A673 (cell line): ENCODE measurements at regions of chr12 and their contacts with region 1.

Region 1: DNA sequence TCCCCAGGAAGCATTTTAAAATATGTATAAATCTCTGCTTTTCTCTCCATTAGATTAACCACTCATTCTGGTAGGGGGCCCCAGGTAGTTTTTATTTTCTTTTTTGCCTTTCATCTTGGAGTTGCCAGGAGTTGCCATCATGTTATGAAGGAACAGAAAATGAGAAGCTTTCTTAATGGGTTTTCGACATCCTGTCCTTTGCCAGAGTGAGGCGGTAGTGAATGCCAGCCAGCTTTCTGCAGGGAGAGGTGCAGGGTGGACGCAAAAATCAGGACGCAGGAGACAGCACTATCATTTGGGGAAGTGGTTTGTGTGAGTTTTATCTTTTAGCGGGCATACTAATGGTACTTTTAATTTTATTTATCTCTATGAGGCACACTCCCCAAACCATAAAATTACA is 1.7 kb downstream of the RASSF8 start:
- DNase-seq: peak; percentile 28
- H3K4me3 ChIP-seq: peak overlapping the region; percentile 66
- H3K27ac ChIP-seq: no peak overlapping the region
- H3K4me1 ChIP-seq: peaks cover 11% of the 10 kb centered on the region
- H3K27me3 ChIP-seq: no peaks in the 10 kb centered on the region
- CTCF ChIP-seq: peak; percentile 40; the same call in 1 of the 2 replicates

Region 2: GRCh38 chr12:24979329-24979728 is 980.8 kb before region 1 on chr12:
- CTCF ChIA-PET with region 1: no interaction called
- POLR2A ChIA-PET with region 1: no interaction called
- intact Hi-C with region 1: no loop called
- DNase-seq: no peak
- H3K4me3 ChIP-seq: no peak overlapping the region
- H3K27ac ChIP-seq: no peak overlapping the region
- H3K4me1 ChIP-seq: no peaks in the 10 kb centered on the region
- H3K27me3 ChIP-seq: no peaks in the 10 kb centered on the region
- CTCF ChIP-seq: no peak

Region 3: DNA sequence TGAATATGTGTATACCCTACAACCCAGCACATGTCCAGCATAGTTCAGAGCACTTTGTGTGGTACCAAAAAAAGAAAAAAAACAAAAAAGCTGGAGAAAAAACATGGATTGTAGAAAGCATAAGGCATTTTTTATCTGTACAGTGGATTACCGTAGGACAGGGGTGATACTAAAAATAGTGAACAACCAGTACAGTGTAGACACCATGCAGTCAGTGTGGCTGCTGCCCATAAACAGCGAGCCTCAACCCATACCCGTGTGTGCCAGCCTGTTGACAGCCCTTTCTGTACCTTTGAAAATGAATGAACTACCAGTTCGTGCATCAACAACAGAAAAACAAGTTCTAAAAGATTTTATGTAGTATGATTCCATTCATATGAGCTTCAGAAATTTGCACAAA is 23.5 kb after region 1 on chr12:
- CTCF ChIA-PET with region 1: interaction called, 17 read pairs
- POLR2A ChIA-PET with region 1: no interaction called
- intact Hi-C with region 1: no loop called
- DNase-seq: no peak
- H3K4me3 ChIP-seq: no peak overlapping the region
- H3K27ac ChIP-seq: no peak overlapping the region
- H3K4me1 ChIP-seq: no peaks in the 10 kb centered on the region
- H3K27me3 ChIP-seq: no peaks in the 10 kb centered on the region
- CTCF ChIP-seq: no peak

Region 4: GRCh38 chr12:26011099-26011498 is 51.0 kb after region 1 on chr12:
- CTCF ChIA-PET with region 1: interaction called, 3 read pairs
- POLR2A ChIA-PET with region 1: no interaction called
- intact Hi-C with region 1: loop called (anchors 5 kb)
- DNase-seq: no peak
- H3K4me3 ChIP-seq: no peak overlapping the region
- H3K27ac ChIP-seq: no peak overlapping the region
- H3K4me1 ChIP-seq: peaks cover 32% of the 10 kb centered on the region
- H3K27me3 ChIP-seq: no peaks in the 10 kb centered on the region
- CTCF ChIP-seq: no peak